ENCODE measurements at regions of chr1 and their contacts with region 1.

Region 1: DNA sequence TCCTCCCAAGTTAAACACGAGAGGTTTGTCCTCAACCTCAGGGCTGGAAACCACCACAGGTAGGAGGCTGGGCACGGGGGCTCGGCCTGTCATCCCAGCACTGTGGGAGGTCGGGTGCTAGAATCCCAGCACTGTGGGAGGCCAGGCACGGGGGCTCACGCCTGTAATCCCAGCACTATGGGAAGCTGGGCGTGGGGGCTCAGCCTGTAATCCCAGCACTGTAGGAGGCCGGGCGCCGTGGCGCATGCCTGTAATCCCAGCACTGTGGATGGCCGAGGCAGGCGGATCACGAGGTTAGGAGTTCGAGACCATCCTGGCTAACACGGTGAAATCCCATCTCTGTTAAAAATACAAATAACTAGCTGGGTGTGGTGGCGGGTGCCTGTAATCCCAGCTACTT is 6.7 kb upstream of the CDK11A start:
- DNase-seq: no peak
- ATAC-seq: no peak
- H3K4me3 ChIP-seq: no peak overlapping the region
- H3K27ac ChIP-seq: no peak overlapping the region
- H3K4me1 ChIP-seq: peaks cover 0 to 14% (median 0%) of the 10 kb centered on the region in 9 donors
- H3K27me3 ChIP-seq: no peaks in the 10 kb centered on the region
- CTCF ChIP-seq: no peak

Region 2: GRCh38 chr1:1665800-1666251 is 65.0 kb before region 1 on chr1:
- intact Hi-C with region 1: loop called in 2 of 10 experiments (anchors 5 kb)
- DNase-seq: no peak
- ATAC-seq: peak in 1 of 8 donors; percentile 39
- H3K4me3 ChIP-seq: no peak overlapping the region
- H3K27ac ChIP-seq: no peak overlapping the region
- H3K4me1 ChIP-seq: peaks cover 0 to 15% (median 0%) of the 10 kb centered on the region in 9 donors
- H3K27me3 ChIP-seq: no peaks in the 10 kb centered on the region
- CTCF ChIP-seq: peak; percentile 5 to 53 (median 44)

Region 3: GRCh38 chr1:1842360-1843146 is 111.7 kb after region 1 on chr1:
- intact Hi-C with region 1: no loop called
- DNase-seq: no peak
- ATAC-seq: peak in 3 of 8 donors; percentile 31 to 43 (median 40)
- H3K4me3 ChIP-seq: no peak overlapping the region
- H3K27ac ChIP-seq: peak overlapping the region in 1 of 10 donors; percentile 26
- H3K4me1 ChIP-seq: peaks cover 2 to 90% (median 77%) of the 10 kb centered on the region in 9 donors
- H3K27me3 ChIP-seq: no peaks in the 10 kb centered on the region
- CTCF ChIP-seq: no peak

Region 4: GRCh38 chr1:2019172-2019543 is 288.3 kb after region 1 on chr1 and contains the start of gene GABRD:
- intact Hi-C with region 1: no loop called
- DNase-seq: no peak
- ATAC-seq: peak in 2 of 8 donors; percentile 6 to 14
- H3K4me3 ChIP-seq: peak within 1 kb of the TSS in 9 of 10 donors; percentile 10 to 41 (median 23)
- H3K27ac ChIP-seq: no peak within 1 kb of the TSS
- H3K4me1 ChIP-seq: peaks cover 0 to 14% (median 7%) of the 10 kb centered on the region in 9 donors
- H3K27me3 ChIP-seq: peaks cover 12 to 87% (median 65%) of the 10 kb centered on the region in 7 donors
- CTCF ChIP-seq: no peak
- total RNA-seq, gene GABRD: 0.30 to 1.1 (median 0.44) TPM in 8 of 10 donors, not detected in the others

Measured in heart right ventricle (tissue), 16 donors.